HepG2 (cell line): ENCODE measurements at regions of chr3 and their contacts with region 1.

Region 1: GRCh38 chr3:88113311-88114162 is 36.2 kb upstream of the C3orf38 start:
- DNase-seq: peak; percentile 60
- ATAC-seq: peak; percentile 96
- H3K4me3 ChIP-seq: no peak overlapping the region
- H3K27ac ChIP-seq: no peak overlapping the region
- H3K4me1 ChIP-seq: no peaks in the 10 kb centered on the region
- H3K27me3 ChIP-seq: no peaks in the 10 kb centered on the region
- CTCF ChIP-seq: peak; percentile 66
- EP300 ChIP-seq: no peak
- POLR2A ChIP-seq: no peak
- RAD21 ChIP-seq: no peak

Region 2: GRCh38 chr3:87350364-87351199 is 763.0 kb before region 1 on chr3:
- CTCF ChIA-PET with region 1: no interaction called
- POLR2A ChIA-PET with region 1: no interaction called
- in situ Hi-C with region 1: no loop called
- intact Hi-C with region 1: loop called (anchors 1 kb)
- DNase-seq: peak; percentile 41
- ATAC-seq: peak; percentile 93
- H3K4me3 ChIP-seq: no peak overlapping the region
- H3K27ac ChIP-seq: no peak overlapping the region
- H3K4me1 ChIP-seq: no peaks in the 10 kb centered on the region
- H3K27me3 ChIP-seq: no peaks in the 10 kb centered on the region
- CTCF ChIP-seq: peak; percentile 73
- EP300 ChIP-seq: no peak
- POLR2A ChIP-seq: no peak
- RAD21 ChIP-seq: 0 out of 2 replicates have a peak, but pooled peaks have one; percentile 25

Region 3: GRCh38 chr3:87771341-87772192 is 342.0 kb before region 1 on chr3:
- CTCF ChIA-PET with region 1: interaction called, 10 read pairs
- POLR2A ChIA-PET with region 1: no interaction called
- in situ Hi-C with region 1: loop called (anchors 10 kb)
- intact Hi-C with region 1: loop called (anchors 1 kb)
- DNase-seq: peak; percentile 35
- ATAC-seq: peak; percentile 97
- H3K4me3 ChIP-seq: no peak overlapping the region
- H3K27ac ChIP-seq: no peak overlapping the region
- H3K4me1 ChIP-seq: no peaks in the 10 kb centered on the region
- H3K27me3 ChIP-seq: no peaks in the 10 kb centered on the region
- CTCF ChIP-seq: peak; percentile 71
- EP300 ChIP-seq: no peak
- POLR2A ChIP-seq: no peak
- RAD21 ChIP-seq: peak; percentile 38; the same call in 1 of the 2 replicates

Region 4: GRCh38 chr3:87900061-87900460 is 213.5 kb before region 1 on chr3:
- CTCF ChIA-PET with region 1: no interaction called
- POLR2A ChIA-PET with region 1: no interaction called
- in situ Hi-C with region 1: no loop called
- intact Hi-C with region 1: loop called (anchors 2 kb)
- DNase-seq: no peak
- ATAC-seq: no peak; the same call in 2 of the 3 replicates
- H3K4me3 ChIP-seq: no peak overlapping the region
- H3K27ac ChIP-seq: no peak overlapping the region
- H3K4me1 ChIP-seq: no peaks in the 10 kb centered on the region
- H3K27me3 ChIP-seq: no peaks in the 10 kb centered on the region
- CTCF ChIP-seq: no peak
- EP300 ChIP-seq: no peak
- POLR2A ChIP-seq: no peak
- RAD21 ChIP-seq: no peak